Activated CD8-positive, alpha-beta T cell treated with anti-CD3 and anti-CD28 coated beads for 36 hours (primary cell): ENCODE measurements at regions of chr17 and their contacts with region 1.

Region 1: DNA sequence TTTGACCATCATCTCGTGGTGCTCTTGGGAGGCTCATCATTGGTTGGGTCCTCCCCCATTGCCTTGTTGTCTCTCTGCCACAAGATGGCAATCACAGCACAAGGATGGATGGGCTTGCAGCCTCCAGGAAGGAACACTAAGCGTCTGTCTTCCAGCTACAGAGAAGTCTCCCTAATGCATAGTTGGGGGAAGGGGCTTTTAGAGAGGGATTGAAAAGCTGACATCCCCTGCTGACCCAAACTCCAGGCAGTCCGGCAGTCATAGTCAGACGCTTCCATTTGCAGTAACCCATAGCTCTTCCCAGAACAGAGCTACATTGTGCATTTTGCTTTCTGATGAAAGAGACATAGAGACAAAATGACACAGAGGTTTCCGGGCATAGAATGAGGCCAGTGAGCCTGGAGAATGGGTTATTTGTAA is 111.4 kb downstream of the UTP18 start:
- DNase-seq: peak; percentile 52
- ATAC-seq: peak; percentile 82
- H3K4me3 Mint-ChIP-seq: peak overlapping the region; percentile 2
- H3K27ac Mint-ChIP-seq: no peak overlapping the region
- H3K4me1 Mint-ChIP-seq: peaks cover 8% of the 10 kb centered on the region
- H3K27me3 Mint-ChIP-seq: peaks cover 5% of the 10 kb centered on the region
- CTCF ChIP-seq: peak; percentile 57

Region 2: GRCh38 chr17:51461578-51462004 is 89.8 kb after region 1 on chr17:
- CTCF ChIA-PET with region 1: interaction called, 19 read pairs
- POLR2A ChIA-PET with region 1: no interaction called
- intact Hi-C with region 1: no loop called
- DNase-seq: peak; percentile 63
- ATAC-seq: peak; percentile 72
- H3K4me3 Mint-ChIP-seq: no peak overlapping the region
- H3K27ac Mint-ChIP-seq: no peak overlapping the region
- H3K4me1 Mint-ChIP-seq: no peaks in the 10 kb centered on the region
- H3K27me3 Mint-ChIP-seq: peaks cover 1% of the 10 kb centered on the region
- CTCF ChIP-seq: peak; percentile 76

Region 3: DNA sequence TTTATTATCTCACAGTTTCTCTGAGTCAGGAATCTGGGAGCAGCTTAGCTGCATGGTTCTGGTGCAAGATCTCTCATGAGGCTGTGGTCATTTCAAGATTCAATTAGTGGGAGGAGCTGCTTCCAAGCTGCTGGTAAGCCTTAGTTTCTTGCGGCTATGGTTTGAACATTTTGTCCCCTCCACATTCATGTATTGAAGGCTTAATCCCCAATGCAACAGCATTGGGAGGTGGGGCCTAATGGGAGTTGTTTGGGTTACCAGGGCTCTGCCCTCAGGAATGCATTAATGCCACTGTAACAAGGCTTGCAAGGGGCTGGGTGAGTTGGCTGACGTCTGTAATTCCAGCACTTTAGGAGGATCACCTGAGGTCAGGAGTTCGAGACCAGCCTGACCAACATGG is 161.5 kb after region 1 on chr17:
- CTCF ChIA-PET with region 1: interaction called, 36 read pairs
- POLR2A ChIA-PET with region 1: no interaction called
- intact Hi-C with region 1: loop called (anchors 5 kb)
- DNase-seq: no peak
- ATAC-seq: no peak
- H3K4me3 Mint-ChIP-seq: no peak overlapping the region
- H3K27ac Mint-ChIP-seq: no peak overlapping the region
- H3K4me1 Mint-ChIP-seq: no peaks in the 10 kb centered on the region
- H3K27me3 Mint-ChIP-seq: peaks cover 4% of the 10 kb centered on the region
- CTCF ChIP-seq: no peak

Region 4: GRCh38 chr17:51540151-51540550 is 168.4 kb after region 1 on chr17:
- CTCF ChIA-PET with region 1: interaction called, 36 read pairs
- POLR2A ChIA-PET with region 1: no interaction called
- intact Hi-C with region 1: loop called (anchors 5 kb)
- DNase-seq: peak; percentile 8
- ATAC-seq: no peak
- H3K4me3 Mint-ChIP-seq: no peak overlapping the region
- H3K27ac Mint-ChIP-seq: no peak overlapping the region
- H3K4me1 Mint-ChIP-seq: peaks cover 6% of the 10 kb centered on the region
- H3K27me3 Mint-ChIP-seq: no peaks in the 10 kb centered on the region
- CTCF ChIP-seq: no peak

Region 5: DNA sequence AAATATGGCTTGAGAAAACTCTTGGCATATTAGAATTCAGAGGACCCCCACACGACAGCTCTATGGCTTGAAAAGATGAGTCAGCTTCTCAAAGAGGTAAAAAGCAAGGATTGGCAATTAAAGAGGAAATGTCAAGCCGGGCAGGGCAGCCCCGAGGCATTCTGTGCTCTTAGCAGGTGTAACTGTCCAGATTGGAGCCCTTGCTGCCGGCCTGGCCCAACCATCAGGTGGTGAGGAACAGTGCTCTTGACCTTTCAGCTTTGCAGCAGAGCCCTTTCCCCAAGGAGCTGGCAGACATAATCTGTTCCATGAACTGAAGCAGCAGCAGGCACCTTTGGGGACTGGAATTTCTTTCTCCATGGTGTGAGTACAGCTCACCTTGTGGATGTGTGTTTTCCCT is 176.4 kb after region 1 on chr17:
- CTCF ChIA-PET with region 1: interaction called, 11 read pairs
- POLR2A ChIA-PET with region 1: no interaction called
- intact Hi-C with region 1: no loop called
- DNase-seq: no peak
- ATAC-seq: no peak
- H3K4me3 Mint-ChIP-seq: no peak overlapping the region
- H3K27ac Mint-ChIP-seq: no peak overlapping the region
- H3K4me1 Mint-ChIP-seq: no peaks in the 10 kb centered on the region
- H3K27me3 Mint-ChIP-seq: peaks cover 4% of the 10 kb centered on the region
- CTCF ChIP-seq: no peak

Region 6: GRCh38 chr17:51640108-51640622 is 268.4 kb after region 1 on chr17:
- CTCF ChIA-PET with region 1: interaction called, 16 read pairs
- POLR2A ChIA-PET with region 1: no interaction called
- intact Hi-C with region 1: no loop called
- DNase-seq: peak; percentile 18
- ATAC-seq: peak; percentile 34
- H3K4me3 Mint-ChIP-seq: no peak overlapping the region
- H3K27ac Mint-ChIP-seq: no peak overlapping the region
- H3K4me1 Mint-ChIP-seq: no peaks in the 10 kb centered on the region
- H3K27me3 Mint-ChIP-seq: peaks cover 10% of the 10 kb centered on the region
- CTCF ChIP-seq: peak; percentile 17